GM13976 (cell line): ENCODE measurements at regions of chrX and their contacts with region 1.

Region 1: DNA sequence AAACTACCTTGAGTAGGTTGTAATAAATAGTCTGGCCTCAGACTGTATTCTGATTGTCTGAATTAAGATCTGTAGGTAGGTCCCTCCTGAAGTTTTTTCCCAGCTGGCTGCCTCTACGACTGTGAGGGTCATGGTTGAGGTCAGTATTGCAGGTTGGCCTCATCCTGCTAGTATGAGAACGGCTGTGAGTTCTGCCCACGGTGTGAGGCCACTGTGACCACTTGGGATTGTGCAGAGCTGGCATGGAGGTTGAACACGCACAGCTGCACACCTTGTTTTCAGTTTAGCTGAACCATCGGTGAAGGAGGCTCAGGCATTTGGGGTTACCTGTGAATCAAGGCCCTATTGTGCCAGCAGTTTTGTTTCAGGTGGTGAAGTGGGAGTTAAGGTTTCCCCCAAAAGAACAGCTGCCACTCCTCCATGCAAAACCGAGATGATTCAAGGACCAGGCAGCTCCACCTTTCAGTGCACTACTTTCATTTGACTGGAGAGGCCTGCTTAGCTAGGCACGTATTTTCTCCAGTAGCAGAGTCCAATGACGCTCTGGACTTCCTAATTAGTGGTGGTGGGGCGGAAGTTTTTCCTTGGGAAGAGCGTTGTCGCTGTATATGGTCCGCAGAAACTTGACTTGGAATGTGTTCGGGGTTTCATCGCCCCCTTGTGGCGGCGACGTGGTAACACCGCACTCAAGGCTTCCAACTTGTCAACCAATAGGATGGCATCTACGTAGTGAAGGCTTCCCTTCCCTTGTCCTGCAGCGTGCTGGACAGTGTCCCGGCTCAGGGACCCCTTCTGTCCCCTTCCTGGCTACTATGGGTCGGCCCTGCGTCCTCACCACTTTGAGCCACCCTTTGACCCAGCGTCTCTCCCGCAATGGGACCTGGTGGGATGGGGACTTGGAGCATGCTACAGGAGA is 13.8 kb downstream of the CMC4 start:
- DNase-seq: peak; percentile 47
- CTCF ChIP-seq: peak; percentile 81

Region 2: DNA sequence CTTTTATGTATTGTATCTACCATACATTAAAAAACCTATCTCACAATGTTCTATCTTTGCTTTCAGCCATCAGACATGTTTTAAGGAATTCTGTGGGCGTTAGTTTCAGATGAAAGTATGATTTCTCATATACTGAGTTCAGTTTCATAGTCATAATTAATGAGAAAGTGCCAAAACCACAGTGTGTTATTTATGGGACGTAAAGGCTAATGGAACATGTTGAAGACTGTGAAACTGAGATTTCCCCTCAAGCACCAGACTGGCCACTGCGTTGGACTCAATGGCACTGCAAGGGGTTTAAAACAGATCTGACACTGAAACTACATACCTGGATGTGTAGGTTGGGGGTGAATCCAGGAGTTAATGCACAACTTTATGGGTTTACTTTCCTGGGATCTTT is 66.6 kb before region 1 on chrX:
- in situ Hi-C with region 1: loop called (anchors 10 kb)
- DNase-seq: no peak
- CTCF ChIP-seq: no peak